ENCODE measurements at regions of chr10 and their contacts with region 1.

Region 1: GRCh38 chr10:120942806-120943413 is 91.7 kb downstream of the WDR11 start:
- DNase-seq: peak; percentile 81
- ATAC-seq: peak; percentile 83 to 87

Region 2: DNA sequence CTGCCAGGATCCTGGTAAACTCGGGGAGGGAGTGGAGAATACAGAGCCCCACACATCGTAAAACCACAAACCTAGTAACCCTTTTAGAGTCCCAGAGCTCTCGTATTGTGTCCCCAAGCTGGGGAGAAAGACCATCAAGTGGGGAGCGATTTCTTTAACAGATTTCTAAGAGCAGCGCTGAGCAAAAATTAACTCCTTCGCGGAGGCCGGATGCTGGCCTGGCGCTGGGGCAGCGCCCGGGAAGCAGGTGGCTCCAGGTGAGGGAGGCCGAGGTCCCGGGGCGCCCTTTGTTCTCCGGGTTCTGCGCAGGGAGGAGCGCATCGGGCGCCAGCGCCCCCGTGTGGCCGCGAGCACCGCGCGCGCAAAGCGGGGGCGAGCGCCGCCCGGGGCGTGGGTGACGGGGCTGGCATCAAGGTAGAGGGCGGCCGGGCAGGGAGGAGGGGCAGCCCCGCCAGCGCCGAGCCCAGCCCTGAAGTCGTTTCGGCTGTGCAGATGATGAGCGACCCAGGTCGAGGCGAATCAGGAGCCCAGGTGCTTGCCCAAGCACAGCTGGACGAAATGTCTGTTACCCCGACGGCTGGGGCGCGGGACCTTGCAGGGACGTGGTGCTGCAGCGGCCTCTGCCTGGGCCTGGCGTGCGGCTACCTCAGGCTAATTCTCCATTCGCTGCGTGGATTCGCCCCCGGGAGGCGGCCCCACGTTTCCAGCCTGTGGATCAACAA is 665.7 kb after region 1 on chr10:
- intact Hi-C with region 1: loop called (anchors 5 to 10 kb)
- DNase-seq: peak; percentile 42
- ATAC-seq: peak; percentile 90 to 97

Region 3: GRCh38 chr10:121886997-121887622 is 944.2 kb after region 1 on chr10:
- intact Hi-C with region 1: loop called in 1 of 2 experiments (anchors 2 kb)
- DNase-seq: peak; percentile 48
- ATAC-seq: peak; percentile 82 to 83